ENCODE measurements at regions of chr19 and their contacts with region 1.

Region 1: GRCh38 chr19:2018752-2019151 is 3.2 kb upstream of the BTBD2 start:
- DNase-seq: no peak
- ATAC-seq: no peak
- H3K4me3 Mint-ChIP-seq: no peak overlapping the region
- H3K27ac Mint-ChIP-seq: no peak overlapping the region
- H3K4me1 Mint-ChIP-seq: peaks cover 8% of the 10 kb centered on the region
- H3K27me3 Mint-ChIP-seq: no peaks in the 10 kb centered on the region

Region 2: GRCh38 chr19:1929021-1929742 is 89.6 kb before region 1 on chr19:
- CTCF ChIA-PET with region 1: interaction called, 14 read pairs
- DNase-seq: peak; percentile 89
- ATAC-seq: peak; percentile 96
- H3K4me3 Mint-ChIP-seq: peak overlapping the region; percentile 59
- H3K27ac Mint-ChIP-seq: no peak overlapping the region
- H3K4me1 Mint-ChIP-seq: peaks cover 14% of the 10 kb centered on the region
- H3K27me3 Mint-ChIP-seq: no peaks in the 10 kb centered on the region

Region 3: DNA sequence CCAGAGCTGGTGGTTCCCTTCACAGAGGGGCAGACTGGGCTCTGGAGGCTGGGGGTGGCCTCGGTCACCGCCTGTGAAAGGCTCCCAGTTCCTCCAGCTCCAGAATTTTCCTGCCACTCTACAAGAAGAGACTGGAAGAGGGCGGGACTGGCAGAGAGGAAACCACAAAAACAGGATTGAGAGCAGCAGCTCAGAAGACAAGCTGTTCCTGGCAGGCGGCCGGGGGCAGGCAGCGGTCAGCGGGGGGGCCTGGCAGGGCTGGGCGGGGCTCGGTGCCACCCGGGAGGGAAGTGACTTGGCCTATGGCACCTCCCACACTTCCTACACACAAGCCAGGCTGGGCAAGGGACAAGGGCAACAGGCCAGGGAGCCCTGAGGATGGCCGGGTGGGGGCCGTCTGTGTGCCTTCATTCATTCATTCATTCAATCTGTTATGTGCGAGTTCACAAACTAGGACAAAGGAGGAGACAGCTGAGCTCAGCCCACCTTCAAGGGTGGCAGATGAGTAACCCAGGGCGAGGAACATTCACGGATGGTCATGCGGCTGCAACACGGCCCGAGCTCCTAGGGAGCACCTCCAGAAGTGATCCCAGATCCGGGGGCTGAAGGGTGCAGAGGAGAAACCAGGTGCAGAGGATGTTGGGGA is 13.7 kb after region 1 on chr19:
- CTCF ChIA-PET with region 1: interaction called, 14 read pairs
- DNase-seq: peak; percentile 59
- ATAC-seq: peak; percentile 42
- H3K4me3 Mint-ChIP-seq: peak overlapping the region; percentile 55
- H3K27ac Mint-ChIP-seq: peak overlapping the region; percentile 67
- H3K4me1 Mint-ChIP-seq: peaks cover 24% of the 10 kb centered on the region
- H3K27me3 Mint-ChIP-seq: no peaks in the 10 kb centered on the region

Region 4: GRCh38 chr19:2041683-2042484 is 23.1 kb after region 1 on chr19:
- CTCF ChIA-PET with region 1: interaction called, 14 read pairs
- DNase-seq: peak; percentile 99
- ATAC-seq: peak; percentile 87
- H3K4me3 Mint-ChIP-seq: peak overlapping the region; percentile 48
- H3K27ac Mint-ChIP-seq: peak overlapping the region; percentile 85
- H3K4me1 Mint-ChIP-seq: peaks cover 27% of the 10 kb centered on the region
- H3K27me3 Mint-ChIP-seq: no peaks in the 10 kb centered on the region